Lower leg skin (tissue), 4 donors: ENCODE measurements at regions of chr2 and their contacts with region 1.

Region 1: GRCh38 chr2:219331560-219332213 is 857 bp downstream of the RESP18 start:
- DNase-seq: no peak
- H3K4me3 ChIP-seq: no peak overlapping the region
- CTCF ChIP-seq: no peak
- POLR2A ChIP-seq: no peak

Region 2: GRCh38 chr2:219060821-219061791 is 270.6 kb before region 1 on chr2 and contains the start of gene IHH:
- intact Hi-C with region 1: loop called (anchors 10 kb)
- DNase-seq: no peak
- H3K4me3 ChIP-seq: no peak within 1 kb of the TSS
- CTCF ChIP-seq: no peak
- POLR2A ChIP-seq: no peak
- total RNA-seq, gene IHH: 0.30 TPM in 1 of 4 donors, not detected in the others

Region 3: DNA sequence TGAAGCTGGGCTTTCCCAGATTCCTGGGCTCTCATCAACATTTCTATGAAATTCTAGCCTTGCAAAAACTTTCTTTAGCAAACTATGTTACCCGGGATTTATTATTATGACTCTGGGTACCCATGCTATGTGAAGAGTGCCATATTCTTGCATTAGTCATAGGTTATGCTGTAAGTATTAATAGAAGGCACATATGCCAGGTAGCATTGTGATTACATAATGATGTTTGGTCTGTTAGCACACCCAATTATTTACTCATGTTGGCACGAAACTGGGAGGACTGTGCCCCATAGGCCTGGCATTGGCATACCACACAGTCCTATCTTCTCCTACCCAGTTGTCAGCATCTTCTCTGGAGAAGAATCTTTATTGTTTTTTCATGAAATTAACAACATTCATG is 466.7 kb after region 1 on chr2:
- intact Hi-C with region 1: loop called (anchors 10 kb)
- DNase-seq: no peak
- H3K4me3 ChIP-seq: no peak overlapping the region
- CTCF ChIP-seq: no peak
- POLR2A ChIP-seq: no peak